ENCODE measurements at regions of chr7 and their contacts with region 1.

Region 1: GRCh38 chr7:158782761-158783401 is 46.4 kb downstream of the ESYT2 start:
- DNase-seq: no peak
- H3K4me3 Mint-ChIP-seq: no peak overlapping the region
- H3K27ac Mint-ChIP-seq: no peak overlapping the region
- H3K4me1 Mint-ChIP-seq: peaks cover 8% of the 10 kb centered on the region
- H3K27me3 Mint-ChIP-seq: no peaks in the 10 kb centered on the region

Region 2: GRCh38 chr7:158802473-158803202 is 19.8 kb after region 1 on chr7:
- intact Hi-C with region 1: loop called (anchors 2 kb)
- DNase-seq: no peak
- H3K4me3 Mint-ChIP-seq: no peak overlapping the region
- H3K27ac Mint-ChIP-seq: peak overlapping the region; percentile 48
- H3K4me1 Mint-ChIP-seq: peaks cover 34% of the 10 kb centered on the region
- H3K27me3 Mint-ChIP-seq: no peaks in the 10 kb centered on the region

Region 3: GRCh38 chr7:158824028-158824427 is 41.1 kb after region 1 on chr7:
- intact Hi-C with region 1: loop called (anchors 2 kb)
- DNase-seq: peak; percentile 72
- H3K4me3 Mint-ChIP-seq: peak overlapping the region; percentile 63
- H3K27ac Mint-ChIP-seq: peak overlapping the region; percentile 86
- H3K4me1 Mint-ChIP-seq: peaks cover 67% of the 10 kb centered on the region
- H3K27me3 Mint-ChIP-seq: no peaks in the 10 kb centered on the region

Region 4: GRCh38 chr7:158856883-158857668 is 74.2 kb after region 1 on chr7:
- intact Hi-C with region 1: loop called (anchors 2 kb)
- DNase-seq: no peak
- H3K4me3 Mint-ChIP-seq: peak overlapping the region; percentile 97
- H3K27ac Mint-ChIP-seq: no peak overlapping the region
- H3K4me1 Mint-ChIP-seq: peaks cover 37% of the 10 kb centered on the region
- H3K27me3 Mint-ChIP-seq: peaks cover 2% of the 10 kb centered on the region

Measured in activated T-helper 1 cell treated with anti-CD3 and anti-CD28 coated beads, Interleukin-12 subunit alpha, Interleukin-12 subunit beta, Interleukin-2, Interleukin-4 antibody, amounts not matched to agents 30 ng/mL and 10 ng/mL and 1 ng/mL, durations not matched to agents 14 hours and 24 hours and 36 hours (primary cell).